Right cardiac atrium (tissue), 5 donors: ENCODE measurements at regions of chr22 and their contacts with region 1.

Region 1: DNA sequence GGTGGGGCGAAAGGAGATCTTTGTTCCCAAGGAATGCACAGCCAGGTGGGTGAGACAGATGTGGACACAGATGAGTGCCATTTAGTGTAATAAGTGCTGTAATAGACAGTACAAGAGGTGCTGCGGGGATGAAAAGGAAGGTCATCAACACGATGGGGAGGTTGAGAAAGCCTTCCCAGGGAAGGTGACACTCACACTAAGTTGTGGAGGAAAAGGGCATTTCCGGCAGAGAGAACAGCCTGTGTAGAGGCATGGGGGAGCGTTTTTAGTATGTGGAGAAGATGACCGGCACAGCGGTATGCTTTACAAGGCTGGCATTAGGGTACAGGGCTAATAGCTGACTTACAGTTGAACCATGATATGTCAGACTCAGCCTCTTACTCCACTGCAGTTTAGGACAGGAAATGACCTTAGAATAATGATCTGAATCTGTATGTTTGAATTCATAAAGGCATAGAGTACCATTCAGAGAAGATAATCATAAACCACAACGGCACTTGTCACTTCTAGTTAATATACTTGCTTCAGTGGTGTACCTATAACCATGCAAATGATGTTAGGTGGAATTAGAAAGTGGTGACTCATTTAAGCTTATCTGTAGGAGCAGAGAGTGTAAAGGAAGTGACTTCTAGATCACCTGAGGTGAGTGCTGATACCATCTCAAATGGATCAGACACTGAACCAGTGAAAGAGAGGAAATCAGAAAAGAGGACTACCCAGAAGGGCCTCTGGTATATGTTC is 60.6 kb downstream of the FAM83F start:
- DNase-seq: no peak
- ATAC-seq: no peak
- H3K4me3 ChIP-seq: no peak overlapping the region
- H3K27ac ChIP-seq: no peak overlapping the region
- H3K4me1 ChIP-seq: peaks cover 5% of the 10 kb centered on the region
- H3K27me3 ChIP-seq: no peaks in the 10 kb centered on the region

Region 2: DNA sequence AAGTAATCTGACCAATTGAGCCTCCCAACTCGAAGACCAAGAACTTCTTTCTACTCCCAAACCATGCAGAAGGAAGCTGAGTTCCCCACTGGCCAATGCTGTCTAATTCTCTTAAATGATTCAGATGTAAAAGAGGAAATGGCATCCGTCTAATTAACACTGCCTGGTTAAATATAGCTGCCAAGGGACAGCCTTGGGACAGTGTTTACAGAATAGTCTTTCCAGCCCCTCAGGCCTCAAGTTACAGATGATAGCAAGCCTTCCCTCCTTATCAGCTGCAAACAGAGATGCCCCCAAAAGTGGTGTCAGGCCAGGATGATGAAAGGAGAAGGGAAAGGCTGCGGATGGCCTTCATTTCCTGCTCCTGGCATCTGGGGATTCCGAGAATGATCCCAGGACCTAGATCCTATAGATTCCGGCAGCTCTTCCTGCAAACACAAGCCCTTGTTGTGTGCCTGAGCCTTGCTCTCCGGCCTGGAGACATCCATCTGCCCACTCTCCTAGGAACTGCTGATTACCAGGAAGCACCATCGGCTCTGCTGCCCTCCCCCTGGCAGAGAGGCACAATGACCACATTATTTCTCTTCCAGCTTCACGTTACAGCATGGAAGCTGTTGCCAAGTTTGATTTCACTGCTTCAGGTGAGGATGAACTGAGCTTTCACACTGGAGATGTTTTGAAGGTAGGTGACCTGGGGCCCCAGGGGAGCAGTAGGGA is 108.7 kb before region 1 on chr22:
- intact Hi-C with region 1: no loop called
- DNase-seq: no peak
- ATAC-seq: peak in 1 of 2 donors; percentile 32
- H3K4me3 ChIP-seq: no peak overlapping the region
- H3K27ac ChIP-seq: no peak overlapping the region
- H3K4me1 ChIP-seq: peaks cover 2% of the 10 kb centered on the region
- H3K27me3 ChIP-seq: no peaks in the 10 kb centered on the region

Region 3: GRCh38 chr22:40161194-40161593 is 105.9 kb after region 1 on chr22:
- intact Hi-C with region 1: loop called in 1 of 4 experiments (anchors 10 kb)
- DNase-seq: no peak
- ATAC-seq: no peak
- H3K4me3 ChIP-seq: no peak overlapping the region
- H3K27ac ChIP-seq: no peak overlapping the region
- H3K4me1 ChIP-seq: no peaks in the 10 kb centered on the region
- H3K27me3 ChIP-seq: no peaks in the 10 kb centered on the region